Activated CD4-positive, alpha-beta memory T cell treated with anti-CD3 and anti-CD28 coated beads for 36 hours (primary cell): ENCODE measurements at regions of chr11 and their contacts with region 1.

Region 1: DNA sequence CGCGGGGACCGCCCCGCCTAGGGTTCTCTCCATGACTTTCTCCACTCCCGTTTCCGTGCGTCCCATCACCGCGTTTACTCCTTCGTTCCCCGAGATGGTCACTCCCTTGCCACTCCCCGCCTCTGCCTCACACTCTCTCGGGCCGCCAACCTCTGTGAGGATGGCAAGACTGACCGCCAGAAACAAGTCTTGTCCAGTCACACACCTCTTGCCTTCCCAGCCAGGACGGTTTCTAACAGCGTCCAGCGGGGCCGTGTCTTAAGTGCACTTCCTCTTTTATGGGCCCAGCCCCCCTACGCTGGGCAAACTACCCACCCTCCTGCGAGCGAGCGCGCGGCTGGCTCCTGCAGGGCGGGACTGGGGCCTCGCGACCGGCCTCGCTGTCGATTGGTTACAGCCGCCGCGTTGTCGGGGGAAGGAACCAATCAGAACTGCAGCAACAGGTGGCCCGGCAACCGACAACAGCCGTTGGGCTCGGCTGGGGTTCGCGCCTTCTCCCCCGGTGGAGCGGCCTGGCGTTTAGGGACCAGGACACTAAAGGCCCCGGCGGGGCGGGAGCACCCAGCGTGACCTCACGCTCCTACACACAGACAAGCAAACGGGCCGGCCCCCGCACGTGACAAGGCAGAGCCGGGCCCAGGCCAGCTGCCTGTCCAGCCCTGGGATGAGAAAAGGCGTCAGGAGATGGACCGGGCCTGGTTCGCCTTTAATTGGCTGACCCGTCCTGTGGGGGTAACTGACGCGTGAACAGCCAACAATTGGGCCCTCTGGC is 512 bp upstream of the UCP2 start:
- DNase-seq: peak; percentile 97
- H3K4me3 Mint-ChIP-seq: peak overlapping the region; percentile 91
- H3K27ac Mint-ChIP-seq: peak overlapping the region; percentile 97
- H3K4me1 Mint-ChIP-seq: peaks cover 43% of the 10 kb centered on the region
- H3K27me3 Mint-ChIP-seq: no peaks in the 10 kb centered on the region

Region 2: GRCh38 chr11:73876424-73877300 is 106.5 kb before region 1 on chr11 and contains the starts of genes COA4 and PAAF1:
- CTCF ChIA-PET with region 1: no interaction called
- POLR2A ChIA-PET with region 1: no interaction called
- intact Hi-C with region 1: loop called (anchors 5 kb)
- DNase-seq: peak; percentile 97
- H3K4me3 Mint-ChIP-seq: peak within 1 kb of the TSS; percentile 97
- H3K27ac Mint-ChIP-seq: peak within 1 kb of the TSS; percentile 94
- H3K4me1 Mint-ChIP-seq: peaks cover 33% of the 10 kb centered on the region
- H3K27me3 Mint-ChIP-seq: no peaks in the 10 kb centered on the region
- total RNA-seq, gene COA4: 89.5 to 91.6 TPM
- total RNA-seq, gene PAAF1: 29.9 to 33.8 TPM

Region 3: GRCh38 chr11:73995247-73995646 is 12.1 kb after region 1 on chr11:
- CTCF ChIA-PET with region 1: interaction called, 10 read pairs
- POLR2A ChIA-PET with region 1: interaction called, 98 read pairs
- intact Hi-C with region 1: loop called (anchors 1 kb)
- DNase-seq: no peak
- H3K4me3 Mint-ChIP-seq: peak overlapping the region; percentile 49
- H3K27ac Mint-ChIP-seq: peak overlapping the region; percentile 91
- H3K4me1 Mint-ChIP-seq: peaks cover 75% of the 10 kb centered on the region
- H3K27me3 Mint-ChIP-seq: no peaks in the 10 kb centered on the region

Region 4: GRCh38 chr11:74011360-74012073 is 28.4 kb after region 1 on chr11:
- CTCF ChIA-PET with region 1: interaction called, 5 read pairs
- POLR2A ChIA-PET with region 1: interaction called, 95 read pairs
- intact Hi-C with region 1: loop called (anchors 2 kb)
- DNase-seq: peak; percentile 84
- H3K4me3 Mint-ChIP-seq: peak overlapping the region; percentile 24
- H3K27ac Mint-ChIP-seq: peak overlapping the region; percentile 95
- H3K4me1 Mint-ChIP-seq: peaks cover 86% of the 10 kb centered on the region
- H3K27me3 Mint-ChIP-seq: no peaks in the 10 kb centered on the region

Region 5: DNA sequence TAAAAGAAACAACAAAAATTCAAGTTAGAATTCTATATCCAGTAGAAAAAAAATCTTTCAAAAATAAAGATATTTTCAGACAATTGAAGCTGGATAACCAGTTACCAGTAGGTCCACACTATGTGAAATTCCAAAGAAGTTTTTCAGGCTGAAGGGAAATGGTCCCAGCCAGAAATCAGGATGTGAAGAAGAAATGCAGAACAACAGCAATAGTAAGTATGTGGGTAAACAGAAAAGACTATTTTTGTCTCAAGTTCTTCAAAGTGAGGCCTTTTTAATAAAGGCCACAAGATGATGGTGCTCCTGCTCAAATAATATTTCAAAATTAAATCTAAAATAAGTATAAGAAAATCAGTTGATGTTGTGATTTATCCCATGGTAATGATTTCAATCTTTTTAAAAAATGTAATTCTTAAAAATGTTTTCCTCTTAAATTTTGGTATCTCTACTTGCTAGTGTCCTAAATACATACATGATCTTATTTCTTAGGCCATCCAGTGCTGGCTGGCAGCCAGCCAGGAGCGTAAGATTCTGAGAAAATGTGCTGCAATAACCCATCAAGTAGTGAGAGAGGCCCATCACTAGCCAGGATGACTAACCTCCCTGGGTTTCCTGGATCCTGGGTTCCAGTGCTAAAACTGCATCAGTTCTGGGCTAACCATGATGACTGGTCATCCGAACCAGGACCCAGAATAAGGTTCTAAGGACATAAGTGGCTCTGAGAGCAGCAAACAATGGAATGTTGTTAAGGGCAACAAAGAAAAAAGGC is 41.3 kb after region 1 on chr11:
- CTCF ChIA-PET with region 1: interaction called, 8 read pairs
- POLR2A ChIA-PET with region 1: interaction called, 25 read pairs
- intact Hi-C with region 1: loop called (anchors 1 kb)
- DNase-seq: peak; percentile 83
- H3K4me3 Mint-ChIP-seq: no peak overlapping the region
- H3K27ac Mint-ChIP-seq: peak overlapping the region; percentile 61
- H3K4me1 Mint-ChIP-seq: peaks cover 38% of the 10 kb centered on the region
- H3K27me3 Mint-ChIP-seq: no peaks in the 10 kb centered on the region

Region 6: DNA sequence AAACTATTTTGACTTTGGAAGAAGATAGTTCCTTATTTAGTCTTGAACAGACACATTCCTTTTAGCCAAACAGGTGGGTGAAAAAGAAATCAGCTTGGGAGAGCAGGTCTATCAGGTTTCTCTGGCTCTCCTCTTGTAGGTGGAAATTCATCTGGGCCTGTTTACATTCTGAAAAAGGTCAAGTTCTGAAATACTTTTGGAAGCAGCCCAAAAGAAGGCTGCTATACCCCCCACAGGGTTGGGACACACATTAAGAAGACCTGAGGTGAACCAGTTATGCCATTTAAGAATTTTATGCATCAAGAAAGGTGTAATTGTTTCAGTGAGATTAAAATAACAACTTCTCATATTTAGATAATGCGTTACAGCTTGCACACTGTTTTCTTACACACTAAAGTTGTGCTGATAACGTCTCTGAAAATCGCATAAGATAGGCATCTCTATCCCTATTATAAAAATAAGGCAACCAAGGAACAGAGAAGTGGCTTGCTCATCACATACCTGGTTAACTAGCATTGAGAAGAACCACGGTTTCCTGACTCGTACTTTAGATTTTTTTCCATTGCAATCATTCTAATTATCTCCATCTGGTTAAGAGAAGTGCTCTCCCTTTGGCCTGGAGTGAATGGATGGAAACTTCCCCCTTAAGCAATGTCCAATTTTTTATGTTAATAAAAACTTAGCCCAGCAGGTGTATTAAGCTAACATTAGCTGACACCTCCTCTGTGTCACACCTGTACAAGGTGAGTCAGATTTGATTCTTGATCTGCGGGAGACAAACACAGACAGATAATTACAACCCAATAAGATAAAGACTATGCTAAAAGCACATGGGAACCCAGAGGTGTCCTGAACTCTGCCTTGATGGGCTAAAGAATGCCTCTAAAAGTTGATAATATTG is 86.2 kb after region 1 on chr11:
- CTCF ChIA-PET with region 1: no interaction called
- POLR2A ChIA-PET with region 1: interaction called, 3 read pairs
- intact Hi-C with region 1: loop called (anchors 5 kb)
- DNase-seq: no peak
- H3K4me3 Mint-ChIP-seq: no peak overlapping the region
- H3K27ac Mint-ChIP-seq: no peak overlapping the region
- H3K4me1 Mint-ChIP-seq: peaks cover 8% of the 10 kb centered on the region
- H3K27me3 Mint-ChIP-seq: no peaks in the 10 kb centered on the region

Region 7: DNA sequence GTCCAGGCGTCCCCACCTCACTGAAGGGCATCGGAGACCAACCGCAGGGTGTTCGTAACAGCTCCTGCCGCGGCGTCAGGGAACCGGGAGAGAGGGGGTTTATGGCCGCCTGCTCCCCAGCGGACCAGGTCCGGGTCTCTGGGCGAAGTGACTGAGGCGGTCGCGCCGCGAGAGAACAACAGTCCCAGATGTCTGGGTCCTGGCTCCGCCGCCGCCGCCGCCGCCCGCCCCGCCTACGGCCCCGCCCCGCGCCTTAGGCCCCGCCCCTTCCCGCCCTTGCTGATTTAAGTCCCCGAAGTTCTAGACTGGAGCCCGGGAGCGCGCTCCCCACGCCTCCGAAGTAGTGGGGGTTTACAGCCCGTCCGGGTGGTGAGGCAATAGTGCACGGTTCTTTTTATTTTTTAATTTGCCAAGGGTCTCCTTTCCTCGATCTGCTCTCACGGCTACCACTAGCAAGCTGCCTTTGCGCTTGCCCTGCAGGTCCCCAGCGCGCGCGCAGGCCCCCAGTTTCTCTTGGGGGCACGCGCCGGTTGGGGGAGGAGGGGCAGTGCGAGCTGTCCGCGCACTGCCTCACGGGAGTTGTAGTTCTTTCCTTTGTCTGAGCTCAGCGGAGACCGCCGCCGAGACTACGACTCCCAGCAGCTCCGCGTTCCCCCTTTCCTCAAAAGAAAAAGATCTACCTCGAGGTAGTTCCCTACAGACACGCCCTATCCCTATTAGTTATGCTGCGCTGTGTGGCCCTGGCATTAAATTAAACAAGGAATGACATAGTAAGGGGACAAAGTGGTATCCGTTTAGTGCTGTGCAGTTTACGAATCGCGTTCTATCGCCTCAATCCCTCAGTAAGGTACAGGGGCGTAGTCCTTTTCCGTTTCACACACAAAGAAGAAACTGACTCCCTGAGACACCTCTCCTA is 415.3 kb after region 1 on chr11 and contains the start of gene PGM2L1:
- CTCF ChIA-PET with region 1: no interaction called
- POLR2A ChIA-PET with region 1: no interaction called
- intact Hi-C with region 1: loop called (anchors 5 kb)
- DNase-seq: peak; percentile 94
- H3K4me3 Mint-ChIP-seq: peak within 1 kb of the TSS; percentile 90
- H3K27ac Mint-ChIP-seq: peak within 1 kb of the TSS; percentile 94
- H3K4me1 Mint-ChIP-seq: peaks cover 38% of the 10 kb centered on the region
- H3K27me3 Mint-ChIP-seq: no peaks in the 10 kb centered on the region
- total RNA-seq, gene PGM2L1: 7.0 to 7.2 TPM